ENCODE measurements at regions of chr7 and their contacts with region 1.

Region 1: GRCh38 chr7:120280743-120281142 is 7.8 kb downstream of the KCND2 start:
- DNase-seq: no peak
- ATAC-seq: no peak
- H3K4me3 ChIP-seq: no peak overlapping the region
- H3K27ac ChIP-seq: no peak overlapping the region
- H3K4me1 ChIP-seq: no peaks in the 10 kb centered on the region
- H3K27me3 ChIP-seq: no peaks in the 10 kb centered on the region
- CTCF ChIP-seq: no peak

Region 2: DNA sequence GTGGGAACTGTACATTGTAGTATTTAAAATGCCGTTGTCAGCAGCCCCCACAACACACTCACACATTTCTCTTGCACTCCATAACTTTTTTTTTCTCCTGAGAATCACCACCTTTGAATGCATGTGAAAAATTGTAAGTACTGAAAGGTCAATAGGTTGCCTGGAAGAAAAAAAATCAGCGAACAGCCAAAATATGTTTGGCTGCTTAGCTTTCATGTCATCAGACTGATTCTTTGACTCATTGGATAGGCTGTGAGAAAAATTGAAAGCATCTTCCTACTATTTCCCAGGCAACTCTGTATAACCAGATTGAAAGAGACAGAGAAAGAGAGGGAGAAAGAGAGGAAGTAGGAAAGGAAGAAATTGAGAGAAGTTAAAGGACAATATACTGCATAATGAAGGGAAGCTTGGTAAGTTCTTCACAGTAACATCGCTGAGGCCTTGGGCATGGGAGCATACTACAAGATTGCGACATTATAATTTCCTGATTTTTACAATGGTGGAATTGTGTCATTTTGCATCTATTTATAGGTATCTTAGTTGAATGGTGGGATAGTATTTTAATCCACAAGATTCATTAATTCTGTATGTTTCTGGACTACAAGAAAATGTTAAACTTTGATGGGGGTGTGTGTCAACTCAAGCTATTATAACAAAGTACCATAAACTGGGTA is 257.1 kb before region 1 on chr7:
- CTCF ChIA-PET with region 1: no interaction called
- POLR2A ChIA-PET with region 1: no interaction called
- in situ Hi-C with region 1: no loop called
- intact Hi-C with region 1: loop called (anchors 10 kb)
- DNase-seq: no peak
- ATAC-seq: no peak
- H3K4me3 ChIP-seq: no peak overlapping the region
- H3K27ac ChIP-seq: no peak overlapping the region
- H3K4me1 ChIP-seq: no peaks in the 10 kb centered on the region
- H3K27me3 ChIP-seq: no peaks in the 10 kb centered on the region
- CTCF ChIP-seq: no peak